Cardiac septum (tissue), 1 donor: ENCODE measurements at regions of chr6 and their contacts with region 1.

Region 1: DNA sequence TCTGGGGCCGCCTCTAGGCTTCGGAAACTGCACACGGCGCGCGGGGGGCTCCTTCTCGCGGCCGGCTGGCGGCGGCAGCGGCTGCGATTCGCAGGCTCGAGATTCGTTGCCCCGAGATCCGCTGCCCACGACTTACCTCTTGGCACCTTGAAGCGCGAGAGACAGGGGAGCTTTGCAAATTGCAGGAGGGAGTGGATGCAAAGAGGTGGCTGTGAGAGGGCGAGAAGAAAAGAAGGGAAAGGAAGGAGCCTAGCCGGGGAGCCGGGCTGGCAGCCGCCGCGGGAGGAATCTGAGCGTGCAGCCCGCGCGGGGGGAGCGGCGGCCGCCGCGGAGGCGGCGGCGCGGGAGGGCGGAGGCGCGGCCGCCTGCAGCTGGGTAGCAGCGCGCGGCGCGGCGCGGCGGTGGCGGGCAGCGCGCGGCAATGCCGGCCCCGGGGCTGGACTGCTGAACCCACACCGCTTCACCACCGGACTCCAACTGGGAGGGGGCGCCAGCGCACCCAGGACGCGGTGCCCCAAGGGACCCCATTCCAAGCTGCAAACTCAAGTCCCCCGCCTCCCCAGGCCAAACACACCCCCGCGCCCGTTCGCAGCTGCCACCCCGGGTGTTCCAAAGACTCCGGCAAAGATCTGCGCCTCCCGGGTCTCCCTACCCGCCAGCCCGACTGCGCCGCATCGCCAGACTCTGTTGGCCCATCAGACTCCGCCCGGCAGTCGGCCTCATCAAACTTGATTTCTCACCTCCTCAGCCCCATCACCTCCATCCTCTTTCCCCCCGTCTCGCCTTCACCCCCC is 44.2 kb upstream of the SUPT3H start:
- DNase-seq: peak; percentile 84

Region 2: DNA sequence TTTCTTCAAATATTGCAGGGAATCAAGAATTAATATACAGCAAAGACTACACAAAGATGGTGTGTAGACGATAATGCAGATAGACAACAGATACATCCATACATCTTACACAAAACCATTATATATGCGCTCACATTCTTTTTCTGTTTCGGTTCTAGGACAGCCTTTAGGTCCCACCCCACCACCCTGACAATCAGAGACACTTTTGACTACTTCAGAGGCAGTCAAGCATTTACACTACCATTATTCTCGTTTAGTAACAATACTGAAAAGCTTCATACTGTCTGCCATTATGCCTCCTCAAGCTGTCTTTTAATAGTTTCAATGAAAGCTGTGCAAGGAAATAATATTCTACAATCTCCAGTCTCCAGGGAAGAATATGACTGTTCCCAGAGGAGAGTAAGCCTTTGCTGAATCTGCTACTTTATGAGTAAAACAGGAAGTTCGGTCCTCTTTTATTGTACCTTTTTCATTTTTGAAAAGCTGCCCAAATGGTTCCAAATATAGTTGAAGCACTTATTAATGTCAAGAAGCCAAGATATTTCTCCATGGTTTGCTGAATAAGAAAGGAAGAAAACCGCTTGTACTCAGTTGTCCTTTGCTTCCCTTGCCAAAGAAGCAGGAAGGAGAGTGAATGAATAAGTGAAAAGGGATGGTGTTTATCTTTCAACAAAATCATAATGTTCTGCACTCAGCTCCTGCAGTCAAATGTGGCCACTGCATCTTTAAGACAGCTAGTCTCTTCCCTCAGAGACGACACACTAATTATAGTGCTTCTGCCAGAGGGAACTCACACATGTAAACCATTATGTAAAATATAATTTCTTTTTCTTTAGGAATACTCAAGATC is 566.1 kb before region 1 on chr6:
- intact Hi-C with region 1: loop called (anchors 10 kb)
- DNase-seq: no peak

Region 3: GRCh38 chr6:45714741-45715507 is 293.0 kb after region 1 on chr6:
- intact Hi-C with region 1: loop called (anchors 2 kb)
- DNase-seq: no peak

Region 4: GRCh38 chr6:45959534-45960145 is 537.7 kb after region 1 on chr6:
- intact Hi-C with region 1: no loop called
- DNase-seq: no peak